HepG2 (cell line): ENCODE measurements at regions of chr1 and their contacts with region 1.

Region 1: GRCh38 chr1:221741711-221742554 is at the start of gene DUSP10:
- DNase-seq: peak; percentile 99
- ATAC-seq: peak; percentile 87
- H3K4me3 ChIP-seq: peak within 1 kb of the TSS; percentile 83 to 87 (median 83)
- H3K27ac ChIP-seq: peak within 1 kb of the TSS; percentile 84
- H3K4me1 ChIP-seq: peaks cover 23% of the 10 kb centered on the region
- H3K27me3 ChIP-seq: no peaks in the 10 kb centered on the region; a peak in 2 of 5 replicates
- CTCF ChIP-seq: peak; percentile 29
- EP300 ChIP-seq: no peak
- POLR2A ChIP-seq: peak; percentile 67
- RAD21 ChIP-seq: no peak
- total RNA-seq, gene DUSP10: 2.1 and 2.5 TPM in 2 replicates

Region 2: GRCh38 chr1:221543529-221544120 is 198.3 kb before region 1 on chr1:
- CTCF ChIA-PET with region 1: no interaction called
- POLR2A ChIA-PET with region 1: no interaction called
- in situ Hi-C with region 1: no loop called
- intact Hi-C with region 1: loop called (anchors 10 kb)
- DNase-seq: no peak
- ATAC-seq: no peak; the same call in 2 of the 3 replicates
- H3K4me3 ChIP-seq: no peak overlapping the region
- H3K27ac ChIP-seq: no peak overlapping the region
- H3K4me1 ChIP-seq: no peaks in the 10 kb centered on the region
- H3K27me3 ChIP-seq: no peaks in the 10 kb centered on the region
- CTCF ChIP-seq: peak; percentile 29; the same call in 1 of the 2 replicates
- EP300 ChIP-seq: no peak
- POLR2A ChIP-seq: no peak
- RAD21 ChIP-seq: no peak

Region 3: DNA sequence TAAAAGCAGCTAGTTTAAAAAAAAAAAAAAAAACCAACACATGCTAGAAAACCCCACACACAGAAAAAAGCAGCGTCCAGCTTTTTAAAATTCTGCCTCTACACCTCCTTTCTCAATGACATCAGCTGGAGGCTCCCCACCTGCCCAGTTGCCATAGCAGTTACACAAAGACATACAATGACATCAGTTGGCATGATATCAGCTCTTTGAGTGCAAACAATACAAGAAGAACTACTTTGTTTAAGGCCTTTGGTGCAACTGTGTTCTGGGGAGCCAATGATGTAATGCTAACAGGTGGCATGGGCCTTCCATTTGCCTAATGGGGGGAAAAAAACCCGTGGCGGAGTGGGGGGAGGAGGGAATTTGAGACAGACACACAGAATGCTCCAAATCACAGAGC is 32.9 kb before region 1 on chr1:
- CTCF ChIA-PET with region 1: no interaction called
- POLR2A ChIA-PET with region 1: interaction called, 20 read pairs
- in situ Hi-C with region 1: no loop called
- intact Hi-C with region 1: loop called (anchors 5 kb)
- DNase-seq: peak; percentile 85
- ATAC-seq: peak; percentile 68
- H3K4me3 ChIP-seq: no peak overlapping the region
- H3K27ac ChIP-seq: peak overlapping the region; percentile 48
- H3K4me1 ChIP-seq: peaks cover 57% of the 10 kb centered on the region
- H3K27me3 ChIP-seq: no peaks in the 10 kb centered on the region
- CTCF ChIP-seq: no peak
- EP300 ChIP-seq: no peak
- POLR2A ChIP-seq: no peak
- RAD21 ChIP-seq: no peak

Region 4: GRCh38 chr1:221753828-221754188 is 11.9 kb after region 1 on chr1:
- CTCF ChIA-PET with region 1: no interaction called
- POLR2A ChIA-PET with region 1: no interaction called
- in situ Hi-C with region 1: no loop called
- intact Hi-C with region 1: no loop called
- DNase-seq: no peak
- ATAC-seq: no peak
- H3K4me3 ChIP-seq: no peak overlapping the region
- H3K27ac ChIP-seq: no peak overlapping the region
- H3K4me1 ChIP-seq: no peaks in the 10 kb centered on the region
- H3K27me3 ChIP-seq: no peaks in the 10 kb centered on the region
- CTCF ChIP-seq: no peak
- EP300 ChIP-seq: no peak
- POLR2A ChIP-seq: no peak
- RAD21 ChIP-seq: no peak

Region 5: DNA sequence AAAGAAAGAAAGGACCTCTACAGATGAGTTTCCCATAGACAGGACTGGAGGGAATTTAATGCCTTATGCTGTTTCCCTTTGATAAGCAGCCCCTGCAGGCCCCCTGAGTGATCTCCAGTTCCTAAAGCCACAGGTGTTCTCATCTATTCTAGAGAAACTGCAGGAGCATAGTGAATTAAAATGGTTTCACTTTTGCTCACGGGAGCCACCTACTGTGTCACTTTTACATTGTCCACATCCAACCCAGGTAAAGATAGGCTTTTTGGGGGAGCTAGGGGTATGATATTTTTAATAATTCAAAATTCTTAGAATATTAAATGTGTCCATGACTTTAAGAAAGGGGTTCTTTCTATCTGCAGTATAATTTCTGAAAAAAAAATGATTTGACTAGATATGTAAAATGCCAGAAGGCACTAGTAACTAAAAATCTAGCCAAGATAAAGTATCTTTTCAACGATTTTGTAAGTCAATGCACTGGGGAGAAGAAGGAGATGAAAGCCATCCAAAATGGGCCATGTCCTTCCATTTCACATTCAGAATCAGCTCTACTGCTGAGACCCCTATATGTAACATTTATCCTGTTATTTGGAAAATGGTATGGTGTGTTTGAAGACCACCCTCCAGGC is 267.3 kb after region 1 on chr1:
- CTCF ChIA-PET with region 1: no interaction called
- POLR2A ChIA-PET with region 1: no interaction called
- in situ Hi-C with region 1: no loop called
- intact Hi-C with region 1: loop called (anchors 10 kb)
- DNase-seq: peak; percentile 16
- ATAC-seq: peak; percentile 80
- H3K4me3 ChIP-seq: no peak overlapping the region
- H3K27ac ChIP-seq: no peak overlapping the region
- H3K4me1 ChIP-seq: no peaks in the 10 kb centered on the region
- H3K27me3 ChIP-seq: no peaks in the 10 kb centered on the region
- CTCF ChIP-seq: peak; percentile 48
- EP300 ChIP-seq: no peak
- POLR2A ChIP-seq: no peak
- RAD21 ChIP-seq: no peak